B cell (primary cell): ENCODE measurements at regions of chr10 and their contacts with region 1.

Region 1: GRCh38 chr10:110497438-110498086 is at the start of gene DUSP5:
- DNase-seq: peak; percentile 99
- ATAC-seq: peak; percentile 91
- H3K4me3 ChIP-seq: peak within 1 kb of the TSS in 4 of 5 experiments; percentile 57 to 71 (median 62)
- H3K4me3 Mint-ChIP-seq: peak within 1 kb of the TSS; percentile 93
- H3K27ac ChIP-seq: peak within 1 kb of the TSS; percentile 65 to 80
- H3K27ac Mint-ChIP-seq: peak within 1 kb of the TSS; percentile 93
- H3K4me1 ChIP-seq: peaks cover 35 to 51% of the 10 kb centered on the region in 2 donors
- H3K4me1 Mint-ChIP-seq: peaks cover 56% of the 10 kb centered on the region
- H3K27me3 ChIP-seq: peaks cover 0 to 14% (median 2%) of the 10 kb centered on the region in 4 experiments
- H3K27me3 Mint-ChIP-seq: peaks cover 6% of the 10 kb centered on the region
- CTCF ChIP-seq: no peak
- total RNA-seq, gene DUSP5: 10.0 and 10.8 TPM in 2 replicates

Region 2: GRCh38 chr10:110446954-110447608 is 50.5 kb before region 1 on chr10:
- CTCF ChIA-PET with region 1: no interaction called
- POLR2A ChIA-PET with region 1: no interaction called
- intact Hi-C with region 1: no loop called
- DNase-seq: no peak
- ATAC-seq: no peak
- H3K4me3 ChIP-seq: no peak overlapping the region
- H3K4me3 Mint-ChIP-seq: no peak overlapping the region
- H3K27ac ChIP-seq: no peak overlapping the region
- H3K27ac Mint-ChIP-seq: no peak overlapping the region
- H3K4me1 ChIP-seq: peaks cover under 1 to 1% of the 10 kb centered on the region in 2 donors
- H3K4me1 Mint-ChIP-seq: peaks cover 4% of the 10 kb centered on the region
- H3K27me3 ChIP-seq: peaks cover 0 to 9% (median 2%) of the 10 kb centered on the region in 4 experiments
- H3K27me3 Mint-ChIP-seq: peaks cover 13% of the 10 kb centered on the region
- CTCF ChIP-seq: no peak

Region 3: DNA sequence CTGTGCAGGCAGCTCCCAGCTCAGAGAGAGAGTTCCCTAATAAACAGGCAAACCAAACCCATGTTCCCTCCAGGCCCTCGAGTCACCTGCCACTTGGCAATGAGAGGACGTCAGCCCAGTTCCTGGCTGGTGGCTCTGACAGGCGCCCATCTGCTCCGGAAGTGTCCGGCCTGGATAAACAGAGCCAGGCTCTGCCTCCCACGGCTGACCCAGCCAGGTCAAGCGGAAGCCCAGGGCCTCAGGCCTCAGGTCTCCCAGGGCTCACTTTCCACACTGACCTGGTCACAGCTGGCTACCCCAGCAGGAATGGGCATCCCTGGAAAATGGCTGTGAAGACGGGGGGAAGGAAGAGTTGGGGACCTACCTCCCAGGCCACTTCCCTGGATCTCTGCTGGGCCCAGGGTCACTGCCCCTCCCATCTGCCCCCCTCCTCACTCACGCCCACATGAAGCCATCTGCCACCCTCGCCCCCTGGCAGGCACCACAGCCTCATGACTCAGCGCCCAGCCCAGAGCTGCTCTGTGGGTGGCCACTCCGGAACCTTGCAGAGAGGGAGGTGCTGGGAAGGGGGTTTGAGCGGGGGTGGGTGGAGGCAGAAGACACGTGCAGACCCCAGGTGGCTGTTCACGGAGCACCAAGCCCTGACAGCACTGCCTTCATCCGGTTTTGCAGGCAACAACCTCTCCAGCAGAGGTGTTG is 37.3 kb before region 1 on chr10:
- CTCF ChIA-PET with region 1: no interaction called
- POLR2A ChIA-PET with region 1: interaction called, 3 read pairs
- intact Hi-C with region 1: loop called (anchors 1 kb)
- DNase-seq: peak; percentile 53
- ATAC-seq: peak; percentile 68
- H3K4me3 ChIP-seq: no peak overlapping the region
- H3K4me3 Mint-ChIP-seq: peak overlapping the region; percentile 65
- H3K27ac ChIP-seq: peak overlapping the region in 1 of 2 donors; percentile 45
- H3K27ac Mint-ChIP-seq: peak overlapping the region; percentile 86
- H3K4me1 ChIP-seq: peaks cover 72 to 74% of the 10 kb centered on the region in 2 donors
- H3K4me1 Mint-ChIP-seq: peaks cover 73% of the 10 kb centered on the region
- H3K27me3 ChIP-seq: no peaks in the 10 kb centered on the region
- H3K27me3 Mint-ChIP-seq: peaks cover 8% of the 10 kb centered on the region
- CTCF ChIP-seq: no peak

Region 4: GRCh38 chr10:110864662-110865140 is 367.1 kb after region 1 on chr10:
- CTCF ChIA-PET with region 1: no interaction called
- POLR2A ChIA-PET with region 1: no interaction called
- intact Hi-C with region 1: loop called (anchors 5 kb)
- DNase-seq: peak; percentile 89
- ATAC-seq: peak; percentile 55
- H3K4me3 ChIP-seq: peak overlapping the region in 4 of 5 experiments; percentile 21 to 60 (median 38)
- H3K4me3 Mint-ChIP-seq: peak overlapping the region; percentile 85
- H3K27ac ChIP-seq: peak overlapping the region; percentile 94 to 96
- H3K27ac Mint-ChIP-seq: peak overlapping the region; percentile 97
- H3K4me1 ChIP-seq: peaks cover 97 to 100% of the 10 kb centered on the region in 2 donors
- H3K4me1 Mint-ChIP-seq: peaks cover 97% of the 10 kb centered on the region
- H3K27me3 ChIP-seq: no peaks in the 10 kb centered on the region
- H3K27me3 Mint-ChIP-seq: no peaks in the 10 kb centered on the region
- CTCF ChIP-seq: no peak